ENCODE measurements at regions of chr9 and their contacts with region 1.

Region 1: GRCh38 chr9:128127990-128128835 is 684 bp upstream of the PTGES2 start:
- DNase-seq: peak; percentile 68
- ATAC-seq: peak; percentile 76
- H3K4me3 ChIP-seq: peak overlapping the region; percentile 88
- H3K27ac ChIP-seq: peak overlapping the region; percentile 99
- H3K4me1 ChIP-seq: peaks cover 14% of the 10 kb centered on the region; the same call in 1 of the 2 replicates
- H3K27me3 ChIP-seq: no peaks in the 10 kb centered on the region; a peak in 2 of 4 replicates
- CTCF ChIP-seq: no peak
- EP300 ChIP-seq: no peak
- POLR2A ChIP-seq: peak; percentile 46; the same call in 1 of the 2 replicates
- RAD21 ChIP-seq: no peak

Region 2: DNA sequence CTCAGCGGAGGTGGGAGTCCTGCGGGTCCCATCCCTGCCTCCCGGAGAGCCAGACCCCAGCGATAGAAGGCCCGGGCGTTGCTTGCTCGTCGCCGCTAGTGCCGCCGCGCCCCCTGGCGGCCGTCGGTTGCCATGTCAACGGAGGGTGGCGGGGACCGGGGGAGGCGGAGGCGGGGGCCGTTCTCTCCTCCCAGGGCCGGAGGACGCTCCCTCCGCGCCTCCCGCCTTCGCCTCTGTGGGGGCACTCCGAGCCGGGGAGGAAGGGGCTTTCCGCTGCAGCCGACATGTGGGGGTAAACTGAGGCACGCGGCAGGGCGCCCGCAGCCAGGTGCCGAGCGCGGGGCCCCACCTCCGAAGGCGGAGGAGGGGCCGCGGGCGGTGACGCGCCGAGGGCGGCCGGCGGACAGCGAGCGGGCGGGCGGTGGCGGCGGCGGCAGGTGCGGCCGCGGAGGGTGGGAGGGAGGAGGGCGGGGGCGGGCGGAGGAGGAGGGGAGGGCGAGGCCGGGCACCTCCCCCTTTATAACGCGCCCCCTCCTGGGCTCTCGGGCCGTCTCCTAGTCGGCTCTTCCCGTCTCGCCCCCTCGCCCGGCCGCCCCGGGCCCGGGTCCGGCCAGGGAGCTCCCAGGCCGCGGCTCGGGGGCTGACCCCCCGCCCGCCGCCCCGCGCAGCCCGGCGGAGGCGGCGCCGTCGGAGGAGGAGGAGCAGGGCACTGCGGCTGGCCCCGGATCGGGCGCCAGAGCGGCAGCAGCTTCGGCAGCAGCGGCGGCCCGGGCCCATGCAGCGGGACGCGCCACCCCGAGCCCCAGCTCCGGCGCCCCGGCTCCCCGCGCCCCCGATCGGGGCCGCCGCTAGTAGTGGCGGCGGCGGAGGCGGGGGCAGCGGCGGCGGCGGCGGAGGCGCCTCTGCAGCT is 342.9 kb before region 1 on chr9:
- CTCF ChIA-PET with region 1: interaction called, 4 read pairs
- POLR2A ChIA-PET with region 1: no interaction called
- RAD21 ChIA-PET with region 1: no interaction called
- SMC1A ChIA-PET with region 1: no interaction called
- in situ Hi-C with region 1: no loop called
- intact Hi-C with region 1: loop called (anchors 5 kb)
- DNase-seq: no peak
- ATAC-seq: peak; percentile 59
- H3K4me3 ChIP-seq: peak overlapping the region; percentile 85
- H3K27ac ChIP-seq: peak overlapping the region; percentile 82
- H3K4me1 ChIP-seq: peaks cover 41% of the 10 kb centered on the region
- H3K27me3 ChIP-seq: no peaks in the 10 kb centered on the region
- CTCF ChIP-seq: peak; percentile 65 to 89 (median 82)
- EP300 ChIP-seq: no peak
- POLR2A ChIP-seq: peak; percentile 44
- RAD21 ChIP-seq: peak; percentile 78

Region 3: GRCh38 chr9:128117613-128118471 is 10.4 kb before region 1 on chr9:
- CTCF ChIA-PET with region 1: interaction called, 84 read pairs
- POLR2A ChIA-PET with region 1: interaction called, 10 read pairs
- RAD21 ChIA-PET with region 1: interaction called, 8 read pairs
- SMC1A ChIA-PET with region 1: interaction called, 9 read pairs
- in situ Hi-C with region 1: no loop called
- intact Hi-C with region 1: no loop called
- DNase-seq: no peak
- ATAC-seq: peak; percentile 79
- H3K4me3 ChIP-seq: no peak overlapping the region
- H3K27ac ChIP-seq: no peak overlapping the region
- H3K4me1 ChIP-seq: peaks cover 23% of the 10 kb centered on the region
- H3K27me3 ChIP-seq: no peaks in the 10 kb centered on the region
- CTCF ChIP-seq: peak; percentile 100; a peak in 5 of 6 replicates
- EP300 ChIP-seq: no peak
- POLR2A ChIP-seq: peak; percentile 65
- RAD21 ChIP-seq: peak; percentile 99

Region 4: DNA sequence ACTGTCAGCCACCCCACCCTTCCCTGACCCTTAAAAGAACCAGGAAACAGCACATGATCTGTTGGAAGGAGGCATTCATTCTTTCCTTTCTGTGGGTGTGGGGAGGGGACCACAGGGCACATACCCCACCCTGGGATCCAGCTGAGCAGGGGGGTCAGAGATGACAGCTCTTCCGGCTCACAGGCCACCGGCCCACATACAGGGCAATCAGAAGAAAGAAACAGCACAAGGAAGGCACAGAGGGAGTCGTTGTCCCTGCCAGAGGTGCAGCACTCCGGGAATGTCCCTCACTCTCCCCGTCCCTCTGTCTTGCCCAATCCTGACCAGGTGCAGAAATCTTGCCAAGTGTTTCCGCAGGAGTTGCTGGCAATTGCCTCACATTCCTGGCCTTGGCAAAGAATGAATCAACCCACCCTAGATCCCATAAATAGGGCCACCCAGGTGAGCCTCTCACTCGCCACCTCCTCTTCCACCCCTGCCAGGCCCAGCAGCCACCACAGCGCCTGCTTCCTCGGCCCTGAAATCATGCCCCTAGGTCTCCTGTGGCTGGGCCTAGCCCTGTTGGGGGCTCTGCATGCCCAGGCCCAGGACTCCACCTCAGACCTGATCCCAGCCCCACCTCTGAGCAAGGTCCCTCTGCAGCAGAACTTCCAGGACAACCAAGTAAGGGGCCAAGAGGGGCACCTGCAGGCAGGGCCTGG is 20.9 kb after region 1 on chr9 and contains the start of gene LCN2:
- CTCF ChIA-PET with region 1: no interaction called
- POLR2A ChIA-PET with region 1: no interaction called
- RAD21 ChIA-PET with region 1: no interaction called
- SMC1A ChIA-PET with region 1: no interaction called
- in situ Hi-C with region 1: no loop called
- intact Hi-C with region 1: no loop called
- DNase-seq: no peak
- ATAC-seq: no peak
- H3K4me3 ChIP-seq: no peak within 1 kb of the TSS
- H3K27ac ChIP-seq: no peak within 1 kb of the TSS
- H3K4me1 ChIP-seq: no peaks in the 10 kb centered on the region
- H3K27me3 ChIP-seq: peaks cover 0 to 1% of the 10 kb centered on the region in 2 experiments; a peak in 2 of 4 replicates
- CTCF ChIP-seq: no peak
- EP300 ChIP-seq: no peak
- POLR2A ChIP-seq: no peak
- RAD21 ChIP-seq: no peak
- polyA plus RNA-seq, gene LCN2: not detected

Region 5: GRCh38 chr9:128159784-128160602 is 31.8 kb after region 1 on chr9 and contains the start of gene BBLN:
- CTCF ChIA-PET with region 1: interaction called, 8 read pairs
- POLR2A ChIA-PET with region 1: interaction called, 3 read pairs
- RAD21 ChIA-PET with region 1: no interaction called
- SMC1A ChIA-PET with region 1: interaction called, 3 read pairs
- in situ Hi-C with region 1: no loop called
- intact Hi-C with region 1: loop called (anchors 1 kb)
- DNase-seq: peak; percentile 50
- ATAC-seq: peak; percentile 95
- H3K4me3 ChIP-seq: peak within 1 kb of the TSS; percentile 99
- H3K27ac ChIP-seq: peak within 1 kb of the TSS; percentile 85
- H3K4me1 ChIP-seq: peaks cover 8% of the 10 kb centered on the region
- H3K27me3 ChIP-seq: no peaks in the 10 kb centered on the region
- CTCF ChIP-seq: no peak
- EP300 ChIP-seq: no peak
- POLR2A ChIP-seq: peak; percentile 96
- RAD21 ChIP-seq: no peak
- polyA plus RNA-seq, gene BBLN: 3.8 to 13.5 TPM

Region 6: GRCh38 chr9:128191406-128192046 is 63.3 kb after region 1 on chr9 and contains the start of gene CIZ1:
- CTCF ChIA-PET with region 1: interaction called, 4 read pairs
- POLR2A ChIA-PET with region 1: no interaction called
- RAD21 ChIA-PET with region 1: interaction called, 11 read pairs
- SMC1A ChIA-PET with region 1: interaction called, 3 read pairs
- in situ Hi-C with region 1: no loop called
- intact Hi-C with region 1: no loop called
- DNase-seq: no peak
- ATAC-seq: peak; percentile 98
- H3K4me3 ChIP-seq: peak within 1 kb of the TSS; percentile 74
- H3K27ac ChIP-seq: peak within 1 kb of the TSS; percentile 83
- H3K4me1 ChIP-seq: peaks cover 8% of the 10 kb centered on the region
- H3K27me3 ChIP-seq: no peaks in the 10 kb centered on the region
- CTCF ChIP-seq: peak; percentile 63 to 85 (median 68); a peak in 5 of 6 replicates
- EP300 ChIP-seq: no peak
- POLR2A ChIP-seq: peak; percentile 91
- RAD21 ChIP-seq: 0 out of 2 replicates have a peak, but pooled peaks have one; percentile 5
- polyA plus RNA-seq, gene CIZ1: 1.8 to 5.0 TPM

Region 7: DNA sequence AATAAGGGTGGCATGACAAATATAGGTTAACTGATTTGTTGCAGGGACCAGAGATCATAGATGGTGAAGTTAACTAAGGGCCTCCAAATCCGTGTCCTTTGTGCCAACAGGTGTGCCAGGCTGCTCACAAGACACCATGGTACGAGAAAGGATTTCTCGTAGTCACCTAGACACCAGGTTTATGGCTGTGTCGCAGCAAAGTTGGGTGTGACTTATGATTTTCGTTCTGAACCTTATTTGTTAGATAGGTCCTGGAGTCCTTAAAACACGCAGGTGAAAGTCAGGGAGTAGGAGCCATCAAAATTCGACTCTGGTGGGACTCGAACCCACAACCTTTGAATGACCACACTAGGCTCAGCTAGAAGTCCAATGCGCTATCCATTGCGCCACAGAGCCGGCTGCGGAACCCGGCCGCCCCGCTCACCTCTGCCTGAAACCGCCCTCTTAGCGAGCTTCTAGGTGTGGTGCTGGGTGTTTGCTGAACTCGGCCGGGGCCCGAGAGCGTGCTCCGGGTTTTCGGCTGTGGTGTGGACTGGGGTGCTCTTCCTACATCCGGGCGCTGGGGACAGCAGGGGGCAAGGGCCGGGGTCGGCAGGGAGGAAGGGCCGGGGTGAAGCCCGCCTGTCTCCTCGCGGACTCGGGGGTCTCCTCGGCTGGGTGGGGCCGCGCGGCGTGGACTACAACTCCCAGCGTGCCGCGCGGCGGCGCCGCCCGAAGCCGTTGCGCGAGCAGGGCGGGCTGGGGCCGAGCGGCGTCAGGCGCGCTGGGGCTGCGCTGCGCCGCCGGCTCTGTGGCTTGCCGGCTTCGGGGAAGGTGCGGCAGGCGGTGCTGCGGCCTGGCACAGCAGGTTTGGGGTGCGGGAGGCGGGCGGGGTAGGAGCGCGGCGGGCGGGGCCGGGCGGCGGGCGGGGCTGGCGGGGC is 211.8 kb after region 1 on chr9 and contains the start of gene SLC27A4:
- CTCF ChIA-PET with region 1: interaction called, 3 read pairs
- POLR2A ChIA-PET with region 1: no interaction called
- RAD21 ChIA-PET with region 1: interaction called, 5 read pairs
- SMC1A ChIA-PET with region 1: interaction called, 4 read pairs
- in situ Hi-C with region 1: no loop called
- intact Hi-C with region 1: loop called (anchors 5 kb)
- DNase-seq: peak; percentile 61
- ATAC-seq: peak; percentile 91
- H3K4me3 ChIP-seq: peak within 1 kb of the TSS; percentile 87
- H3K27ac ChIP-seq: peak within 1 kb of the TSS; percentile 24; the same call in 1 of the 2 replicates
- H3K4me1 ChIP-seq: no peaks in the 10 kb centered on the region
- H3K27me3 ChIP-seq: no peaks in the 10 kb centered on the region
- CTCF ChIP-seq: no peak
- EP300 ChIP-seq: no peak
- POLR2A ChIP-seq: peak; percentile 41; the same call in 1 of the 2 replicates
- RAD21 ChIP-seq: no peak
- polyA plus RNA-seq, gene SLC27A4: 0.13 to 1.1 TPM

Measured in GM12878 (cell line).